CD4-positive, alpha-beta T cell (primary cell): ENCODE measurements at regions of chr16 and their contacts with region 1.

Region 1: DNA sequence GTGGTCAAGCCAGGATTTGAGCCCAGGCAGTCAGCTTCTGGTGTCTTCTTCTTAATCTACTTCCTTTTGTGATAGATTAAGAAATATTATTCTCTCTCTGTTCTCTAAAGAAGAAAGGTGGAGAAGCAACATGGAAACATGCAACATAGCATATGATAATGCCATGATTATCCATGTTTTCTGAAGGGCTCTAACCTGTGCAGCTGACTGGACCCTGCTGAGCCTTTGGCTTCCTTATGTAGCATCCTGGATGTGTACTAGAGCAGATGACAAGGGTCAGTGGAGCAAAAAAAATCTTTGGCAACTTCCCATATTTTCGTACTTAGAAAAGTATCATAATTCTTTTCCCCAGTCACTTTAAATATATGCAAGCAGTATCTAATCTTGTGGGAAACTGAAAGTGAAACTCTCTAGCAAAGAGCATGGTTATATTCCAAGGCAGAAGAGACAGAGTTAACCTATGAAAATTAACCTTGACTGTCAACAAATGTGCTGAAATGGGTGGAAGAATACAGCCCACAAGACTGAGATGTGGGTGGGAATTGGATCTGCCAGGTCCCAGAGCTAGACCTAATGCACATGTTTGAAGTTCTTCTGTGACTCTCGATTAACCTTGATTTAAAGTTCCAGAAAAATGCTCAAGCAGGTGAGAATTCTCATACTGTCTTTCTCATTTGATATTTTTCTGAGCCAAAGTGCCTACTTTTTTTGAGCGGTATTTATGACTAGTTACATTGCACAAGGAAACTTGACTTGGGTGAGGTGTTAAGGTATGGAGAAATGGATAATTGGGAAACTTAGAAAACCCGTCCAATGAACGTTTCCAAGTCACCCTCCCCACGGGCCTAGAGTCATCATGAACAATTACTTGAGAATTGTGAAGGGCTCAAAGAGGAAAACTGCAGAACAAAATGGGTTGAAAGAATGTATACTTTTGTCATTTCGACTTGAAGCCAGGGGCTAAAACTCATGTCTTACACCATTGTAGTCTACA is 248.6 kb downstream of the FTO start:
- DNase-seq: peak in 2 of 14 experiments; percentile 11 to 45
- ATAC-seq: peak; percentile 41
- H3K4me3 ChIP-seq: peak overlapping the region; percentile 10
- H3K4me3 Mint-ChIP-seq: peak overlapping the region; percentile 79
- H3K27ac ChIP-seq: no peak overlapping the region
- H3K27ac Mint-ChIP-seq: peak overlapping the region; percentile 51
- H3K4me1 ChIP-seq: peaks cover 4% of the 10 kb centered on the region
- H3K4me1 Mint-ChIP-seq: peaks cover 34% of the 10 kb centered on the region
- H3K27me3 ChIP-seq: no peaks in the 10 kb centered on the region
- H3K27me3 Mint-ChIP-seq: no peaks in the 10 kb centered on the region
- CTCF ChIP-seq: no peak

Region 2: DNA sequence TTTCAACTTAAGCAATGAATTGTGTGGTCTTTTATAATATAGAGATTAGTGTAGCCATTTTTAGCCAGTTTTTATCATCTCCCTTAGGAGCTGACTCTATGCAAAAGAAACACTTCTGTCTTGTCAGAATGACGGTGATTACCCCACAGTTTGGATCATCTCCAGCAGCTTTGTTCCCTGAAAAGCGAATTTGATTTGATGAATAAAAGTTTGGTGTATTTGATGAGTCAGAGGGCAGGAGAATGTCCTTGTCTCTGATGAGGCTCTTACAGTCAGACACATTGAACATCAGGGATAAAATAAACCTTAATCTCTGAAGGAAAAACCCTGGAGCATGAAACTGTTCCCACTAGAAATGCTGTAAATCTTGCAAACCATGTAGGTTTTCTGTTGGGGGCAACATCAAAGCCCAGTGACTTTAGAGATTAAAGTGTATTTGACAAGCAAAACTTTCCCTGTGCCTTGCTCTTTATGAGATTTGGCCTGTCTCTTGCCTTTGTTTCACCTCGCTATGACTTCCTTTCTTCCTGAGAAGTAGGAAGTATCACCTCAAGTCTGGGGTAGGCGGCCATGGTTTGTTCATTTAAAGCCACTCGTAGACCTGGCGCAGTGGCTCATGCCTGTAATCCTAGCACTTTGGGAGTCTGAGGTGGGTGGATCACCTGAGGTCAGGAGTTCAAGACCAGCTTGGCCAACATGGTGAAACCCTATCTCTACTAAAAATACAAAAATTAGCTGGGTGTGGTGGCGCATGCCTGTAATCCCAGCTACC is 39.2 kb before region 1 on chr16:
- CTCF ChIA-PET with region 1: interaction called, 3 read pairs
- POLR2A ChIA-PET with region 1: no interaction called
- intact Hi-C with region 1: loop called in 1 of 2 experiments (anchors 5 kb)
- DNase-seq: peak in 1 of 14 experiments; percentile 37
- ATAC-seq: no peak
- H3K4me3 ChIP-seq: no peak overlapping the region
- H3K4me3 Mint-ChIP-seq: peak overlapping the region; percentile 22
- H3K27ac ChIP-seq: no peak overlapping the region
- H3K27ac Mint-ChIP-seq: no peak overlapping the region
- H3K4me1 ChIP-seq: peaks cover 19% of the 10 kb centered on the region
- H3K4me1 Mint-ChIP-seq: peaks cover 7% of the 10 kb centered on the region
- H3K27me3 ChIP-seq: no peaks in the 10 kb centered on the region
- H3K27me3 Mint-ChIP-seq: no peaks in the 10 kb centered on the region
- CTCF ChIP-seq: no peak

Region 3: GRCh38 chr16:54489225-54490111 is 537.0 kb after region 1 on chr16:
- CTCF ChIA-PET with region 1: no interaction called
- POLR2A ChIA-PET with region 1: no interaction called
- intact Hi-C with region 1: no loop called
- DNase-seq: no peak
- ATAC-seq: no peak
- H3K4me3 ChIP-seq: no peak overlapping the region
- H3K4me3 Mint-ChIP-seq: no peak overlapping the region
- H3K27ac ChIP-seq: no peak overlapping the region
- H3K27ac Mint-ChIP-seq: no peak overlapping the region
- H3K4me1 ChIP-seq: no peaks in the 10 kb centered on the region
- H3K4me1 Mint-ChIP-seq: no peaks in the 10 kb centered on the region
- H3K27me3 ChIP-seq: no peaks in the 10 kb centered on the region
- H3K27me3 Mint-ChIP-seq: peaks cover 5% of the 10 kb centered on the region
- CTCF ChIP-seq: no peak